ENCODE measurements at regions of chr4 and their contacts with region 1.

Region 1: DNA sequence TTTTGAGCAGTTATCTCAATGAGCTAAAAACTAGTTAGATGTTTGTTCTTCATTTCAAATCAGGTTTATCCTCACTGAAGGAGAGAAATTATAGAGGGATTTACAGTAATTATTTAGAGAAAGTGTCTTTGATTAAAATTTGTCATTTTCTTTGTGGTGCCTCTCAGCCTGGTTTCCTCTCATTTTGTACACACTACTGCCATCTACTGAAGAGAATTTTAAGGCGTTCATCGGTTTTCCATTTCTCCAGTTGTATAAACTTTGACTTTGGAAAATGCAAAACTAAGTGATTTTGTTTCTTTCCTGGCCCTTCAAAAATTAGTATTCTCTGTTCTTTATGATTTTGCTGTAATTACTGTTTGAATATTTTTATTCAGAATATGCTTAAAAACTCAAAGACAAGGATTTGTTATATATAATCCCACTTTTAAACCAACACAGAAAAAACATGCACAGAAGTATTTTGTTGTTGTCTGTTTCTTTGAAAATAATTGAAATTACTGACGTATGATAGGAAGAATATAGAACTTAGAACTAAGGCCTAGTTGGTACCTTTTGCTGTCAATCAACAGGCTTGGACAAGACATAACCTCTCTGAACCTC is 34.4 kb upstream of the ANXA3 start:
- DNase-seq: no peak
- H3K4me3 Mint-ChIP-seq: no peak overlapping the region
- H3K27ac Mint-ChIP-seq: no peak overlapping the region
- H3K4me1 Mint-ChIP-seq: no peaks in the 10 kb centered on the region
- H3K27me3 Mint-ChIP-seq: no peaks in the 10 kb centered on the region
- CTCF ChIP-seq: peak; percentile 24

Region 2: DNA sequence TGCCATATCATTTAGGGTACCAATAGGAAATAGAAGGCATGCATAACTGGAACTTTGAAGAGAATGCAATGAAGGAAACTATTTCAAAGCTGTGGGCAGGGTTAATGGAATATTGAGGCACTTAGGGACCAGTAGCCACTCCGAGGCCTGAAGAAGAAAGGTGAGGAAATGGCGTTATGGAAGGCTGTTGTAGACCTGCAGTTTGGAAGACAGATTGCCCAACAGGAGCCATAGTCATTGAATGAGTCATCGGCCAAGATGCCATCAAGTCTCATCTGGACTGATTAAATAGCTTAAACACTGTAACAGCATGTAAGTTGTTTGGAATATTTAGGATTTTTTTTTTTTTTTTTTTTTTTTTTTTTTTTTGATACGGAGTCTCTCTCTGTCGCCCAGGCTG is 899.9 kb before region 1 on chr4:
- CTCF ChIA-PET with region 1: no interaction called
- intact Hi-C with region 1: no loop called
- DNase-seq: no peak
- H3K4me3 Mint-ChIP-seq: no peak overlapping the region
- H3K27ac Mint-ChIP-seq: no peak overlapping the region
- H3K4me1 Mint-ChIP-seq: peaks cover 19% of the 10 kb centered on the region
- H3K27me3 Mint-ChIP-seq: no peaks in the 10 kb centered on the region
- CTCF ChIP-seq: no peak

Region 3: DNA sequence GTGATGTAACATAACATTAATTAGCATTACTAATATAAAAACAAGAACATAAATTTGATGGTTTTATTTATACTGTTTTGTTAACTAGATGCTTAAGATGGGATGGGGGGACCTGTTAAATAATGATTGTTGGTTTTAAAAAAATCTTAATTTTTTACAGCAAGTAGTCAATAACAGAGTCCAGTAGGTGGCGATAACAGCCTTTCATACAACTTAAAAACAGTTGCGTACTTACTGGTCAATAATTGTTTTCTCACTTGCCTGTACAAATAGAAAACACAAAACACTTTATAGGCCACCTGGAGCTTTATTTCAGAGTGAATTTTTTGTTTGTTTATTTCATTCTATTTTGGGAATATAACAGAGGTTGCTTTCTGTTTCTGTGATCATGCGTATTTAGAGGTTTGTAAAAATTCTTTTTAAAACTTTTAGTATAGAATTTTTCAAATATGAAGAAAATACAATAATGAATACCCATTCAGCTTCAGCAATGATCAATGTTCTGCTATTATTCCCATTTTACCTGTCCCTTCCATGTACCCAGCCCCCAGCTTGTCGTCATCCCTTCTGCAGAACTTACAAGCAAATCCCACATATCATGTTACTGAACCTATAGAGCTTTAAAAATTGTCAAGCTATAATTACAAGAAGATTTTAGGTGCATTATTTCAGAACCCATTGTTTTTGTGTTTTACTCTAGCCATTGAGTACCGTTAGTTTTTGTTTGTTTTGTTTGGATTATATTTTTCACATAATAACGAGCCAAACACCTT is 557.4 kb before region 1 on chr4:
- CTCF ChIA-PET with region 1: no interaction called
- intact Hi-C with region 1: loop called (anchors 1 kb)
- DNase-seq: peak; percentile 18
- H3K4me3 Mint-ChIP-seq: no peak overlapping the region
- H3K27ac Mint-ChIP-seq: no peak overlapping the region
- H3K4me1 Mint-ChIP-seq: no peaks in the 10 kb centered on the region
- H3K27me3 Mint-ChIP-seq: no peaks in the 10 kb centered on the region
- CTCF ChIP-seq: peak; percentile 24

Region 4: DNA sequence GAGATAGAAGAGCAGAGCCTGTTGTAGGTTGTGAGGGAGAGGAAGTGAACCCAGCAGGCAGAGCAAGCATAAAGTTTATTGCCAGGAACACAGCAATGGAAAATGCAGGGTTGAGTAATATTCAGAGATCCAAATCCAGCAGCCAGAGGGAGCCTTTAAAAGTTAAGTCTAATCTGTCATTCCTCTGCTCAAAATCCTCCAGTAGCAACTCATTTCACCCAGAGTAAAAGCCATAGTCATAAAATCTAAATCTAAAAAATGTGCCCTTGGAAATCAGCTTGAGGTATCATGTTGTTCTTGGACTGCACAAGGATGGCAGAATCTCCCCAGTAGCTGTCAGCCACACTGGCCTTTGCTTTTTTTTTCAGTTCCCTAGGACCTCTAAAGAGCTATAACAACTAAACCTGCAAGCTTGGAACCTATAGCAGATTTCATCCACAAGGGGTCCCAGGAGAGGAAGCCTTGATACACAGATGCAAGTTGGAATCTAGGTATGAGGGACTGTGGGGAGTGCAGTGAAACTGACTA is 522.9 kb before region 1 on chr4:
- CTCF ChIA-PET with region 1: no interaction called
- intact Hi-C with region 1: loop called (anchors 10 kb)
- DNase-seq: peak; percentile 55
- H3K4me3 Mint-ChIP-seq: no peak overlapping the region
- H3K27ac Mint-ChIP-seq: no peak overlapping the region
- H3K4me1 Mint-ChIP-seq: peaks cover 13% of the 10 kb centered on the region
- H3K27me3 Mint-ChIP-seq: no peaks in the 10 kb centered on the region
- CTCF ChIP-seq: no peak

Region 5: GRCh38 chr4:78414116-78414515 is 103.0 kb before region 1 on chr4:
- CTCF ChIA-PET with region 1: no interaction called
- intact Hi-C with region 1: no loop called
- DNase-seq: no peak
- H3K4me3 Mint-ChIP-seq: no peak overlapping the region
- H3K27ac Mint-ChIP-seq: no peak overlapping the region
- H3K4me1 Mint-ChIP-seq: no peaks in the 10 kb centered on the region
- H3K27me3 Mint-ChIP-seq: no peaks in the 10 kb centered on the region
- CTCF ChIP-seq: no peak

Region 6: GRCh38 chr4:78426972-78427371 is 90.2 kb before region 1 on chr4:
- CTCF ChIA-PET with region 1: interaction called, 3 read pairs
- intact Hi-C with region 1: loop called (anchors 10 kb)
- DNase-seq: peak; percentile 19
- H3K4me3 Mint-ChIP-seq: no peak overlapping the region
- H3K27ac Mint-ChIP-seq: peak overlapping the region; percentile 33
- H3K4me1 Mint-ChIP-seq: peaks cover 32% of the 10 kb centered on the region
- H3K27me3 Mint-ChIP-seq: no peaks in the 10 kb centered on the region
- CTCF ChIP-seq: no peak

Region 7: GRCh38 chr4:78656968-78657445 is 139.9 kb after region 1 on chr4:
- CTCF ChIA-PET with region 1: no interaction called
- intact Hi-C with region 1: no loop called
- DNase-seq: no peak
- H3K4me3 Mint-ChIP-seq: no peak overlapping the region
- H3K27ac Mint-ChIP-seq: no peak overlapping the region
- H3K4me1 Mint-ChIP-seq: no peaks in the 10 kb centered on the region
- H3K27me3 Mint-ChIP-seq: no peaks in the 10 kb centered on the region
- CTCF ChIP-seq: no peak

Region 8: GRCh38 chr4:79353075-79353474 is 835.9 kb after region 1 on chr4:
- CTCF ChIA-PET with region 1: no interaction called
- intact Hi-C with region 1: no loop called
- DNase-seq: no peak
- H3K4me3 Mint-ChIP-seq: no peak overlapping the region
- H3K27ac Mint-ChIP-seq: no peak overlapping the region
- H3K4me1 Mint-ChIP-seq: no peaks in the 10 kb centered on the region
- H3K27me3 Mint-ChIP-seq: no peaks in the 10 kb centered on the region
- CTCF ChIP-seq: no peak

Measured in Calu3 (cell line).